T-cell (primary cell): ENCODE measurements at regions of chr4 and their contacts with region 1.

Region 1: DNA sequence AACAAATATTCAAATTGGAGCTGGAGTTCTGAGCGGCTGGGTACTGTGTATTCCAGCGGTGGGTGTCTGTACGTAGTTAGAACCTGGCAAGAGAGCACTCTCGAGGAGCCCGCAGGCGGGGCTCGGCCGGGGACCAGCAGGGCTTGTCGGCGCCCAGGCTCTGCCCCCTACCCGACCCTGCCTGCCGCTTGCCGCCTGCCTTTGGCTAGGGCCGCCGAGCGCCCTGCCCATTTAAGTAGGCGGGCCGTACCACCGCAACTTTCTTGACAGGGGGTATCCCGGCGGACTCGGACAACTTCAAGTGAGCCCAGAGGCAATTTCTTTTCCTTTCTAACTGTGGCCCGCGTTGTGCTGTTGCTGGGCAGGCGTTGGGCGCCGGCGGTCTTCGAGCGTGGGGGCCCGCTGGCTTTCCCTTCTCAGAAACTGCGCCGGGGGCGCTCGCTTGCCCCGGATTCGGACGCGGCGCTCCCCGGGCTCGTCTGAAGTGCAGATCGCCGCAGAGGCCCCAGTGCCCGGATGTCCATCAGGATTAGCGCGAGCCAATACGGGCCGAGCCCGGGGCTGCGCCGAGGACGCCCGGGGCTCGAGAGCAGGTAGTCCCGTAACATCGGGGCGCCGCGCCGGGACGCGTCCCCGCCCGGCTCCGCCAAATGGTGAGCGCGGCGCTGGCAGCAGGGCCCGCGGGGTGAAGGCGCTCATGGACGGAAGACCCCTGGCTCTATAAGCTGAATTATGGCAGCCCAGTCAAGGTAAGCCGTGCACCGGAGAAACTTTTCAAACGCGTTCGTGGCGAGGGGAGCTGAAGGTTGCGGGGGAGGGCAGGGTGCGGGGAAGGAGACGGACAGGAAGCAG is 72.1 kb downstream of the AFF1 start:
- DNase-seq: peak; percentile 77 to 93 (median 86)
- ATAC-seq: peak; percentile 78 to 85 (median 81)
- H3K4me3 ChIP-seq: peak overlapping the region; percentile 91 to 92
- H3K4me3 Mint-ChIP-seq: peak overlapping the region; percentile 82 to 92 (median 90)
- H3K27ac ChIP-seq: peak overlapping the region; percentile 80
- H3K27ac Mint-ChIP-seq: peak overlapping the region; percentile 99
- H3K4me1 ChIP-seq: peaks cover 17 to 39% of the 10 kb centered on the region in 2 experiments
- H3K4me1 Mint-ChIP-seq: peaks cover 55 to 59% (median 58%) of the 10 kb centered on the region in 3 donors
- H3K27me3 ChIP-seq: no peaks in the 10 kb centered on the region
- H3K27me3 Mint-ChIP-seq: no peaks in the 10 kb centered on the region

Region 2: DNA sequence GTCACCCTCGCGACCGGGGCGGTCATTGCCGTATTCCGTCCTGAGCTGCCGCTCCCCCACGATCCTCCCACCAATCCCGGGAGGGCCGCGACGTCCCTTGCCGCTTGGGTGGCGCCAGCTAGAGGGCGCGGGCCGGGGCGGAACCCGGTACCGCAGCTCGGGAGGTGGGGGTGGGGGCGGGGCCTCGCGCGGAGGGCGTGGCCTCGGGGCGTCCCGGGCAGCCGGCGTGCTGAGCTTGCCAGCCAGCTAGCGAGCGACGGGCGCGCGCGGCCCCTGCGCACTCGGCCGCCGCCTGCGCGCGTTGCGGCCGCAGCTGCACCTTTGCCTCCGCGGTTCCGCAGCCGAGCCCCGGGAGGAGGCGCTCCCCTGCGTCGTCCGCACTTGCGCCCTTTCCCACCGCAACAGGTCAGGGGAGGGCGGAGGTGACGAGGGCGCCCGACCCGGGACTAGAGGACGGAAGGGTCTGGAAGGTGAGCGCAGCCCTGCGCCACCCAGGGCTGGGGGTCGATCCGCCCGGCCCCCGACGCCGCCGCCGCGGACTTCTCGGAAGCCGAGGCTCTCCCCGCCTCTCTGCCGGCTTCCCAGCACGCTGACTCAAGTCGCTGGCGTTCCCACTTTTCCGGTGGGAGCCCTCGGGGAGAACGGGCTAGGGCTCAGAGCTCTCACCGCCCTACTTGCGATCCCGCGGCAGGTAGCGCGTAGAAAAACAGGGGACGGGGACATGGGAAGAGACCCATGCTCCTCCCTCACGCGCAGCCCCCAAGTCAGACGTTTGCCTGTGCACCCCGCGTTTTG is 71.9 kb before region 1 on chr4 and contains the start of gene AFF1:
- CTCF ChIA-PET with region 1: interaction called, 3 to 50 read pairs
- POLR2A ChIA-PET with region 1: interaction called, 10 to 34 read pairs
- DNase-seq: peak; percentile 70 to 96 (median 82)
- ATAC-seq: peak; percentile 77 to 84 (median 80)
- H3K4me3 ChIP-seq: peak within 1 kb of the TSS; percentile 75 to 96
- H3K4me3 Mint-ChIP-seq: peak within 1 kb of the TSS; percentile 84 to 92 (median 87)
- H3K27ac ChIP-seq: peak within 1 kb of the TSS; percentile 82
- H3K27ac Mint-ChIP-seq: peak within 1 kb of the TSS; percentile 96 to 98
- H3K4me1 ChIP-seq: peaks cover 30 to 31% of the 10 kb centered on the region in 2 experiments
- H3K4me1 Mint-ChIP-seq: peaks cover 48 to 54% (median 53%) of the 10 kb centered on the region in 3 donors
- H3K27me3 ChIP-seq: no peaks in the 10 kb centered on the region
- H3K27me3 Mint-ChIP-seq: no peaks in the 10 kb centered on the region
- total RNA-seq, gene AFF1: 65.3 to 112 (median 93.4) TPM

Region 3: DNA sequence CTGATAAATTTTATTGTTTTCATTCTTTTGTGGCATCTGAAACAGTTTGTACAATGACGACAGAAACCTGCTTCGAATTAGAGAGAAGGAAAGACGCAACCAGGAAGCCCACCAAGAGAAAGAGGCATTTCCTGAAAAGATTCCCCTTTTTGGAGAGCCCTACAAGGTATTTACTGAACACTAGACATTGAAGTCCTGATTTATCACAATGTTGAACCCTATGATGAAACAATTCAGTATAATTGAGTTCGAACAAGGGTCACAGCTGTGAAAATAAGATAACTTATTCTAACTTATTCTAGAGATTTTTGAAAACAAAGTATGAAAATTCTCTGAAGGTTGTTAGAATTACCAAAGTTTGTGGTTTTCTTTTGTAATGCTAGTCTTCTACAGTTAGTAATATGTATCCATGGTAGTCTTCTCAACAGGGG is 39.2 kb after region 1 on chr4:
- CTCF ChIA-PET with region 1: no interaction called
- POLR2A ChIA-PET with region 1: no interaction called
- DNase-seq: no peak
- ATAC-seq: no peak
- H3K4me3 ChIP-seq: no peak overlapping the region
- H3K4me3 Mint-ChIP-seq: no peak overlapping the region
- H3K27ac ChIP-seq: no peak overlapping the region
- H3K27ac Mint-ChIP-seq: no peak overlapping the region
- H3K4me1 ChIP-seq: peaks cover 2 to 14% of the 10 kb centered on the region in 2 experiments
- H3K4me1 Mint-ChIP-seq: peaks cover 37 to 54% (median 53%) of the 10 kb centered on the region in 3 donors
- H3K27me3 ChIP-seq: no peaks in the 10 kb centered on the region
- H3K27me3 Mint-ChIP-seq: no peaks in the 10 kb centered on the region